GM10248 (cell line): ENCODE measurements at regions of chr1 and their contacts with region 1.

Region 1: DNA sequence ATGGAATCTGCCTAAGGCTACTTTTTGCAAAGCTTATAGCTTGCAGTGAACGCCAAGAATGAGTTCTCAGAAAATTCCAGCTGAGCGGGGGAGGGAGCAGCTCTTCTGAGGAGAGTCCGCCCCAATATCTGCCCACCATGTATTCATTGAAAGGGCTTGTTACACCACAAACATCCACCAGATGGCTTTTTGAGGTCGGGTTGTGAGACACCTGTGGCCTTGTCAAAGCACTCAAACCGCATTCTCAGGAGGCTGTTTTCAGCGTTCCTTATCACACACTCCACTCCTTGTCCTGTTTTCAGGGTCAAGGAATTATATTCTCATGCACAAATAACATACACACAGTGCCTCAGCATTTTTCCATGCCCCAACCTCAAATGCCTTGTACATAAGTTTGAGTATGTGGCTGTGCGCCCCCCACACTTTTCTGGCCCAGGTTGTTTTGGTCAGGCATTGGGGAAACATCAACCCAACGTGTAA is 3.9 kb upstream of the C4BPB start:
- DNase-seq: peak; percentile 65
- CTCF ChIP-seq: peak; percentile 66

Region 2: GRCh38 chr1:207069858-207070506 is 14.8 kb before region 1 on chr1:
- CTCF ChIA-PET with region 1: interaction called, 20 read pairs
- POLR2A ChIA-PET with region 1: no interaction called
- DNase-seq: peak; percentile 35
- CTCF ChIP-seq: no peak

Region 3: GRCh38 chr1:207097871-207098324 is 13.2 kb after region 1 on chr1:
- CTCF ChIA-PET with region 1: interaction called, 13 read pairs
- POLR2A ChIA-PET with region 1: no interaction called
- DNase-seq: peak; percentile 59
- CTCF ChIP-seq: no peak